ENCODE measurements at regions of chr3 and their contacts with region 1.

Region 1: GRCh38 chr3:9749645-9750555 is at the start of gene OGG1:
- DNase-seq: peak; percentile 84 to 98 (median 95)
- ATAC-seq: peak; percentile 93
- H3K4me3 ChIP-seq: peak within 1 kb of the TSS; percentile 79 to 94
- H3K4me3 Mint-ChIP-seq: peak within 1 kb of the TSS; percentile 96
- H3K27ac ChIP-seq: peak within 1 kb of the TSS; percentile 50 to 52
- H3K27ac Mint-ChIP-seq: peak within 1 kb of the TSS; percentile 93
- H3K4me1 ChIP-seq: peaks cover 35% of the 10 kb centered on the region
- H3K4me1 Mint-ChIP-seq: peaks cover 44% of the 10 kb centered on the region
- H3K27me3 ChIP-seq: no peaks in the 10 kb centered on the region
- H3K27me3 Mint-ChIP-seq: no peaks in the 10 kb centered on the region
- CTCF ChIP-seq: no peak
- total RNA-seq, gene OGG1: 4.9 to 7.9 TPM

Region 2: DNA sequence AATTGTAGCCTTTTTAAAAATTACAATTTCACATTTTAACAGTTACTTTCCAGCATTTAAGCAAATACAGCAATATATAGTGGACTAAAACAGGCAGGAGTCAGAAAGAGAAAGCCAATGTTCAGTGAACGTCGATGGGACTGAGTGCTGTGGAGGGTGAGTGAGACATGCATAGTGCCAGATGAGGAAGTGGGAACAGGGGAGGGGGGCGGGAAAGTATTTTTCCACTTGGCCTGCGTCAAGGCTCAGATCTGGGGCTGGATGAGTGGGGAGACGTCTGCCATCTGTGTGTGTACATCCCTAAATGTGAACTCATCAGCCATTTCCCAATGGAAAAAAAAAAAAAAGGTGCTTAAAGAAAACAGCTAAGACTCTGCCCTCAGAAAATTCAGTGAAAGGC is 767.4 kb before region 1 on chr3:
- CTCF ChIA-PET with region 1: no interaction called
- POLR2A ChIA-PET with region 1: no interaction called
- intact Hi-C with region 1: no loop called
- DNase-seq: no peak
- ATAC-seq: no peak
- H3K4me3 ChIP-seq: no peak overlapping the region
- H3K4me3 Mint-ChIP-seq: no peak overlapping the region
- H3K27ac ChIP-seq: no peak overlapping the region
- H3K27ac Mint-ChIP-seq: no peak overlapping the region
- H3K4me1 ChIP-seq: no peaks in the 10 kb centered on the region
- H3K4me1 Mint-ChIP-seq: no peaks in the 10 kb centered on the region
- H3K27me3 ChIP-seq: no peaks in the 10 kb centered on the region
- H3K27me3 Mint-ChIP-seq: peaks cover 10% of the 10 kb centered on the region
- CTCF ChIP-seq: no peak

Region 3: DNA sequence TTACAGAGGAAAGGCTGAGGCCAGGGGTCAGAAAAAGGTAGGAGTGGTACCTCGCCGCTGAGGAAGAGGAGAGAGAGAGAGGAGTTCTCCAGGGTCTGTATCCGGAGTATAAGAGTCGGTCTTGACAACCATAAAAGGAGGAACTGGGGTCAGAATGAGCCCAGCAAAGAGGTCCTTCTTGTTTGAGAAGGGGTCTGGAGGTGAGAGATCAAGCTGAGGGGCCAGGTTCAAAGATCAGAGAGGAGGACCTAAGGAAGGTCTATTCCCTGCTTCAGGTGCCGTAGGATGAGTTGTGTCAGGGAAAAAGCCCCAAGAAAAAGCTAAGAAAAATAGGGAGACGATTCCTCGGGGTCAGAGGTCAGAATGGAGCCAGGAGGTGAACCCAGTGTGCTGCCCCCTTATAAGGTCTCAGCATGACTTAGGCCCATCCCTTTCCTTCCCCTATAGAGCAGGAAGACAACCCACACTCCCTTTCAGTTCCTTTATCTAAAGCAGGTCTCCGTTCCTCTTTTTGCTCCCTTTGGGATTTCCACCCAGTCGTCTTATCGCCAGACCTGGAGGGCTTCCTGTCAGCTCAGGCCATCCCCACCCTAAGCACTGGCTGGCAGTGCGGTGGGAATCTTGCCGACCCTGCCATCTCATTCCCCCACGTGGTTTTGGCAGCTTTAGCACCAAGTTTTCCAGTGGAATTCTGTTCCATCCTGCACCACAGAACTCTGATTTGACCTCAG is 99.9 kb before region 1 on chr3:
- CTCF ChIA-PET with region 1: no interaction called
- POLR2A ChIA-PET with region 1: interaction called, 7 read pairs
- intact Hi-C with region 1: loop called (anchors 1 kb)
- DNase-seq: peak in 2 of 9 experiments; percentile 10 to 42
- ATAC-seq: no peak
- H3K4me3 ChIP-seq: peak overlapping the region; percentile 90 to 91
- H3K4me3 Mint-ChIP-seq: peak overlapping the region; percentile 93
- H3K27ac ChIP-seq: peak overlapping the region; percentile 88 to 94
- H3K27ac Mint-ChIP-seq: peak overlapping the region; percentile 97
- H3K4me1 ChIP-seq: peaks cover 27% of the 10 kb centered on the region
- H3K4me1 Mint-ChIP-seq: peaks cover 39% of the 10 kb centered on the region
- H3K27me3 ChIP-seq: no peaks in the 10 kb centered on the region
- H3K27me3 Mint-ChIP-seq: no peaks in the 10 kb centered on the region
- CTCF ChIP-seq: no peak

Region 4: GRCh38 chr3:9843715-9844438 is 94.0 kb after region 1 on chr3 and contains the start of gene RPUSD3:
- CTCF ChIA-PET with region 1: no interaction called
- POLR2A ChIA-PET with region 1: no interaction called
- intact Hi-C with region 1: loop called in 1 of 2 experiments (anchors 1 kb)
- DNase-seq: peak; percentile 93 to 99 (median 96)
- ATAC-seq: peak; percentile 98
- H3K4me3 ChIP-seq: peak within 1 kb of the TSS; percentile 96 to 99
- H3K4me3 Mint-ChIP-seq: peak within 1 kb of the TSS; percentile 97
- H3K27ac ChIP-seq: peak within 1 kb of the TSS; percentile 64 to 82
- H3K27ac Mint-ChIP-seq: peak within 1 kb of the TSS; percentile 90
- H3K4me1 ChIP-seq: peaks cover 6% of the 10 kb centered on the region
- H3K4me1 Mint-ChIP-seq: peaks cover 26% of the 10 kb centered on the region
- H3K27me3 ChIP-seq: no peaks in the 10 kb centered on the region
- H3K27me3 Mint-ChIP-seq: no peaks in the 10 kb centered on the region
- CTCF ChIP-seq: no peak
- total RNA-seq, gene RPUSD3: 5.3 to 6.4 TPM

Region 5: GRCh38 chr3:9884555-9885165 is 134.8 kb after region 1 on chr3:
- CTCF ChIA-PET with region 1: no interaction called
- POLR2A ChIA-PET with region 1: no interaction called
- intact Hi-C with region 1: loop called in 1 of 2 experiments (anchors 5 kb)
- DNase-seq: no peak
- ATAC-seq: no peak
- H3K4me3 ChIP-seq: no peak overlapping the region
- H3K4me3 Mint-ChIP-seq: no peak overlapping the region
- H3K27ac ChIP-seq: no peak overlapping the region
- H3K27ac Mint-ChIP-seq: no peak overlapping the region
- H3K4me1 ChIP-seq: no peaks in the 10 kb centered on the region
- H3K4me1 Mint-ChIP-seq: no peaks in the 10 kb centered on the region
- H3K27me3 ChIP-seq: no peaks in the 10 kb centered on the region
- H3K27me3 Mint-ChIP-seq: no peaks in the 10 kb centered on the region
- CTCF ChIP-seq: no peak

Measured in CD8-positive, alpha-beta T cell (primary cell).